Thyroid gland (tissue), 4 donors: ENCODE measurements at regions of chr11 and their contacts with region 1.

Region 1: GRCh38 chr11:82900277-82901164 is at the start of gene PRCP:
- DNase-seq: peak; percentile 96 to 98
- H3K4me3 ChIP-seq: peak within 1 kb of the TSS; percentile 41 to 78 (median 60)
- H3K27ac ChIP-seq: peak within 1 kb of the TSS; percentile 77 to 94 (median 92)
- H3K4me1 ChIP-seq: peaks cover 0 to 9% of the 10 kb centered on the region in 2 donors
- H3K27me3 ChIP-seq: no peaks in the 10 kb centered on the region
- CTCF ChIP-seq: no peak
- POLR2A ChIP-seq: peak in 1 of 2 donors; percentile 96
- total RNA-seq, gene PRCP: 59.1 to 122 (median 81.1) TPM

Region 2: GRCh38 chr11:82778776-82779175 is 121.7 kb before region 1 on chr11:
- intact Hi-C with region 1: no loop called
- DNase-seq: no peak
- H3K4me3 ChIP-seq: no peak overlapping the region
- H3K27ac ChIP-seq: no peak overlapping the region
- H3K4me1 ChIP-seq: no peaks in the 10 kb centered on the region
- H3K27me3 ChIP-seq: no peaks in the 10 kb centered on the region
- CTCF ChIP-seq: no peak
- POLR2A ChIP-seq: no peak

Region 3: DNA sequence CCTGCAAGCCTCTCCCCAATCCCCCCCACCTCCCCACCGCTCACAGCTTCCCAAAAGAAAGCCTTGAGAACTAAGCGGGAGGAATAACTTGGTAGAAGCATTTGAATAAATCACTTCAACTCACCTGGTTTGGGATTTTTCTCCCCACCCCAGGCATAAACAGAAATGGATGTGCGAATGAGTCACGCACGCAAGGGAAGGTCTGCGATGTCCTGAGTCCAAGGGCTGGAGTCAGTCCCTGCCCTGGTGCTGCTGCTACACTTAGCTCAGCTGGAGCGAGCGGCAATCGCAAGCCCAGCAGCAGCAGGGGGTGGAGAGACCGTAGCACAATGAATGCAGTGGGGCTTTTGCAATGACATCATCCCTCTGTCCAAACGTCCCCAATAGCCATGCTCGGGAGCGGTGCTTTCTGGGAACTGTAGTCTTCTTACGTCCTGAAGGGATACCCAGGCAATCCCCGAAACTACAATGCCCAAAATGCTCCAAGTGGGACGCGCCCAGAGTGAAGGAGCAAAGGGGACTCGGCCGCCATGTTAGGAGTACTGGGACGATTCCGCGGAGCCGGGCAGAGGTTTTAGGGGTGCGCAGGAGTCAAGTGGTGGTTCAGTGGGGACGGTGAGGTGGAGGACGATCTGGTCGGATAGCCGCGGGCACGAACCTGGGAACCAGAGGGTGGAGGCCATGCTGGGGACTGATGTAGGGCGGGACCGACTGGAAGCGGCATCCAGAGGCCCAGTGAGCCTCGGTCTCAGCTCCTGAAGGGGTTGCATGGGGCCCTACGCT is 171.2 kb after region 1 on chr11 and contains the start of gene RAB30:
- intact Hi-C with region 1: loop called (anchors 10 kb)
- DNase-seq: peak; percentile 98
- H3K4me3 ChIP-seq: peak within 1 kb of the TSS; percentile 38 to 66 (median 56)
- H3K27ac ChIP-seq: peak within 1 kb of the TSS; percentile 71 to 94 (median 93)
- H3K4me1 ChIP-seq: peaks cover 29 to 38% of the 10 kb centered on the region in 2 donors
- H3K27me3 ChIP-seq: no peaks in the 10 kb centered on the region
- CTCF ChIP-seq: no peak
- POLR2A ChIP-seq: peak; percentile 86 to 99
- total RNA-seq, gene RAB30: 12.0 to 30.0 (median 22.8) TPM

Region 4: GRCh38 chr11:83193315-83194280 is 293.1 kb after region 1 on chr11 and contains the start of gene ANKRD42:
- intact Hi-C with region 1: loop called (anchors 10 kb)
- DNase-seq: peak; percentile 93 to 94
- H3K4me3 ChIP-seq: peak within 1 kb of the TSS; percentile 82 to 95 (median 84)
- H3K27ac ChIP-seq: peak within 1 kb of the TSS; percentile 68 to 89 (median 88)
- H3K4me1 ChIP-seq: peaks cover 32 to 35% of the 10 kb centered on the region in 2 donors
- H3K27me3 ChIP-seq: no peaks in the 10 kb centered on the region
- CTCF ChIP-seq: peak in 2 of 6 experiments; percentile 16 to 23
- POLR2A ChIP-seq: peak; percentile 14 to 87
- total RNA-seq, gene ANKRD42: 25.8 to 31.3 (median 30.1) TPM

Region 5: GRCh38 chr11:83819933-83820549 is 919.5 kb after region 1 on chr11:
- intact Hi-C with region 1: loop called (anchors 10 kb)
- DNase-seq: peak; percentile 10 to 16
- H3K4me3 ChIP-seq: no peak overlapping the region
- H3K27ac ChIP-seq: no peak overlapping the region
- H3K4me1 ChIP-seq: no peaks in the 10 kb centered on the region
- H3K27me3 ChIP-seq: no peaks in the 10 kb centered on the region
- CTCF ChIP-seq: peak; percentile 22 to 91 (median 62)
- POLR2A ChIP-seq: no peak